Tibial artery (tissue), 4 donors: ENCODE measurements at regions of chr6 and their contacts with region 1.

Region 1: GRCh38 chr6:87319271-87319987 is 3.0 kb upstream of the SMIM8 start:
- DNase-seq: no peak
- H3K4me3 ChIP-seq: no peak overlapping the region
- H3K27ac ChIP-seq: no peak overlapping the region
- H3K4me1 ChIP-seq: peaks cover 0 to 11% (median 2%) of the 10 kb centered on the region in 4 donors
- H3K27me3 ChIP-seq: no peaks in the 10 kb centered on the region
- CTCF ChIP-seq: no peak

Region 2: GRCh38 chr6:87396595-87397392 is 77.4 kb after region 1 on chr6:
- intact Hi-C with region 1: no loop called
- DNase-seq: no peak
- H3K4me3 ChIP-seq: no peak overlapping the region
- H3K27ac ChIP-seq: no peak overlapping the region
- H3K4me1 ChIP-seq: no peaks in the 10 kb centered on the region
- H3K27me3 ChIP-seq: no peaks in the 10 kb centered on the region
- CTCF ChIP-seq: no peak

Region 3: GRCh38 chr6:87472525-87473418 is 153.3 kb after region 1 on chr6 and contains the start of gene SLC35A1:
- intact Hi-C with region 1: loop called (anchors 10 kb)
- DNase-seq: peak; percentile 82 to 92
- H3K4me3 ChIP-seq: peak within 1 kb of the TSS; percentile 65 to 67
- H3K27ac ChIP-seq: peak within 1 kb of the TSS; percentile 86 to 87
- H3K4me1 ChIP-seq: peaks cover 0 to 15% (median 9%) of the 10 kb centered on the region in 4 donors
- H3K27me3 ChIP-seq: no peaks in the 10 kb centered on the region
- CTCF ChIP-seq: peak; percentile 36 to 41